ENCODE measurements at regions of chr11 and their contacts with region 1.

Region 1: DNA sequence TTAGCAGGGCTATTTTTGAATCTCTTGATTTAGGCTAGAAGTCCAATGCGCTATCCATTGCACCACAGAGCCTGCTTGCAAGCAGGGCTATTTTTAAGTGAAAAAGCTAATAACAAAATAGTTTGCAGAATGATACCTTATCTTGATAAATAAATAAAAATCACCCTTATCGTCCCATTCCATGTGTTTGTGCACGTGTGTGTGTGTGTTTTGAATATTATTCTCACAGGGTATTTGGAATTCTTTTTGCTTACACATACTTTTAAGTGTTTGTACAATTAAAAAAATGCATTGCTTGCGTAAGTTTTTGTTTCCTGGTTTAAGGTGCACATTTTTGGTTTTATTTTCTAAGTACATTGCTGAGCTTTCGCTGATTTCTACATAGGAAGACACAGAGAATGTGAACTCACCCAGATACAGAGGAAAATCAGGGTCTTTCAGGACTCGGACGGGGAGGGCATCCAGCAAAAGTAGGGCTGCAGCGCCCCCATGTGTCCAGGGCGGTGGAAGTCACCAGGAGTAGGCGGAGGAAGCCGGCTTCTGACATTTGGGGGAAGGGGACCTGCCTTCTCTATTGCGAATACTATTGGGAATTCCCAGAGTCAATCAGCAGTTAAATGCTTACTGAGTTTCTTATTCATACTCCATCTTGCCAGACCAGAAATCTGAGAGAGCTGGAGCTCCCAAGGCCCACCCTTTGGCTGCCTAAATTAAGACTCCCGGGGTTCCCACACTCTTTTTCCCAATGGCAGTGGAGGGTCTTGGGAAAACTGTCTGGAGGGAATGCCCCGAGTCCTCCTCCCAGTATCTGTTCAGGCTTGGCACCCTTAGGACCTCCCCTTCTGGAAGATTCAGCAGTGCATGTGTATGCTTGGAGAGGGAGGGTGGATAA is 27.2 kb downstream of the SLC1A2 start:
- DNase-seq: peak; percentile 78 to 89 (median 81)
- ATAC-seq: peak; percentile 83 to 95 (median 92)
- H3K4me3 ChIP-seq: peak overlapping the region in 3 of 12 donors; percentile 6 to 25 (median 6)
- H3K27ac ChIP-seq: no peak overlapping the region
- H3K4me1 ChIP-seq: peaks cover 0 to 20% (median 6%) of the 10 kb centered on the region in 12 donors
- H3K27me3 ChIP-seq: no peaks in the 10 kb centered on the region
- CTCF ChIP-seq: peak; percentile 74 to 97 (median 89)
- POLR2A ChIP-seq: no peak

Region 2: DNA sequence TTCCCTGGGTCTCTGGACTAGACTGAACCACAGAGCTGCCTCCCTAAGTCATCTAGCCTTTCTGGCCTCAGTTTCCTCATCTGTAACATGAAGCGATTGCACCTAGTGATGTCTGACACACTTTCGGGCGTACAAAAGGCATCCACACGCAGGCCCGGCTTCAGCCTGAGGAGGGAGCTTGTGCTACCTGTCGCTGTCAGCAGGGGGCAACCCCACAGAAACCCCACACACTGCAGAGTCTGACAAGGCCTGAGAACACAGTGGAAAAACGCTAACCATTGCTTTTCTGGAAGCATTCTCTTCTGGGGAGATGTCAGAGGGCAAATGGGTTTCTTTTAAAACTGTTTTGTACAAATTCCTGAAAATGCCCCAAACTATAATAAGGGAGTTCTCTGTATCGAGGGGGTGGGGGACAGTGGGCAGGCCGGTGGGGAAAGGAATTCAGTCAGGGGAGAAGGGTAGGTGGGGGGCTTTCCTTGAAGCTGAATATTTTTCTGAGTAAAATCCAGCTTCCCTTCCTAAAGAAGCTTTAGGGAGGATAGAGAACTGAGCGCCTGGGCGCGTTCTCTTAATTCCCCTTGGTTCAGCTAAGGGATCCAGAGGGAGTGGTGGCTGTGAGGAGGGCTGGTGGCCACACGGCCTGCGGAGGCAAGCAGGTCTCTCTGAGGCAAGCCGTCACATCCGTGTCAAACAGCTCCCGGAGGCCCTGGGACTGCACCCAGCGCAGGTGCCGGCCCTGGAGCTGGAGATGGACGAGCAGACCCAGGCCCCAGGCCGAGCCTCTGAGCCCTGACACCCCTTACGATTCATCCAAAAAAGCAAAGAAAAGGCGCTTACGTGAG is 879.1 kb before region 1 on chr11:
- intact Hi-C with region 1: loop called in 2 of 10 experiments (anchors 5 kb)
- DNase-seq: peak in 1 of 5 donors; percentile 39
- ATAC-seq: peak; percentile 49 to 87 (median 76)
- H3K4me3 ChIP-seq: no peak overlapping the region
- H3K27ac ChIP-seq: no peak overlapping the region
- H3K4me1 ChIP-seq: peaks cover 0 to 16% (median 0%) of the 10 kb centered on the region in 12 donors
- H3K27me3 ChIP-seq: no peaks in the 10 kb centered on the region
- CTCF ChIP-seq: peak; percentile 29 to 70 (median 54)
- POLR2A ChIP-seq: no peak

Region 3: DNA sequence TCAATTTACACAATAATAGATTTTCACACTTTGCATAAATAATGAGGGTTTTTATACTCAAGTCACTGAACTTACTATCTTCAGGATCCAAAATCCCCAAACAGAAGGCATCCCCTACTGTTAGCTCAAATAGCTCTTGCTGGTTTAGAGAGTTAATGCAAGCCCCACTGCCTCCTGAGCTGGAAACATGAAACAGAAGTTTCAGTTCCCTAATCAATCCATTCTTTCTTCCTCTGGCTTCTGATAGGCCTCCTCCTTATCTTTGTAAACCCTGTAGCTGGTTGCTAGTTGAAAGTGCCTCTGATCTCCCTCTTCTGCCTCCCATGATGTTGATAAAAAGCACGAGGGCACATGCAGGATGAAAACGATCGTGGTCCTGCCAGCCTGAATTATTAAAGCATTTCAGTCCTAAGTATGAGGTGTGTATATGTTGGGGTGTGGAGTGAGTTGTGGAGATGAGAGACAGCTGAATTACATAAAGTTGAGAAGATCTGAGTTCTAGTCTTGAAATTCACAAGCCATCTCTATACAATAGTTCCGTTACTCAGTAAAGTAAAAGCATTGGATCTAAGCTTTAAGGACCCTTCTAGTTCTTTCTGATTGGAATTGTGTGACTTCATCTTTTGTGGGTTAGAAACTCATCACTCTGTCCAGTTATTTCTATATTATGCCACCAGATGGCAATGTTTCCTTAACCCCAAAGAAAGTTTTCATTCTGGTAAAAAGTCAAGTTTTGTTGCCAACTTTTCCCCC is 806.3 kb before region 1 on chr11:
- intact Hi-C with region 1: loop called in 9 of 10 experiments (anchors 2 to 5 kb)
- DNase-seq: no peak
- ATAC-seq: peak in 2 of 4 donors; percentile 35 to 56
- H3K4me3 ChIP-seq: peak overlapping the region in 4 of 12 donors; percentile 12 to 44 (median 18)
- H3K27ac ChIP-seq: no peak overlapping the region
- H3K4me1 ChIP-seq: peaks cover 0 to 8% (median 0%) of the 10 kb centered on the region in 12 donors
- H3K27me3 ChIP-seq: peaks cover 0 to 3% (median 0%) of the 10 kb centered on the region in 9 donors
- CTCF ChIP-seq: peak; percentile 42 to 79 (median 66)
- POLR2A ChIP-seq: no peak

Region 4: GRCh38 chr11:34997952-34998528 is 394.1 kb before region 1 on chr11:
- intact Hi-C with region 1: loop called (anchors 1 to 5 kb)
- DNase-seq: no peak
- ATAC-seq: peak in 1 of 4 donors; percentile 55
- H3K4me3 ChIP-seq: no peak overlapping the region
- H3K27ac ChIP-seq: peak overlapping the region in 1 of 12 donors; percentile 19
- H3K4me1 ChIP-seq: peaks cover 0 to 15% (median 0%) of the 10 kb centered on the region in 12 donors
- H3K27me3 ChIP-seq: no peaks in the 10 kb centered on the region
- CTCF ChIP-seq: peak in 10 of 12 donors; percentile 23 to 68 (median 52)
- POLR2A ChIP-seq: no peak

Region 5: GRCh38 chr11:35182317-35182939 is 209.7 kb before region 1 on chr11:
- intact Hi-C with region 1: no loop called
- DNase-seq: no peak
- ATAC-seq: no peak
- H3K4me3 ChIP-seq: no peak overlapping the region
- H3K27ac ChIP-seq: no peak overlapping the region
- H3K4me1 ChIP-seq: peaks cover 0 to 68% (median 5%) of the 10 kb centered on the region in 12 donors
- H3K27me3 ChIP-seq: no peaks in the 10 kb centered on the region
- CTCF ChIP-seq: no peak
- POLR2A ChIP-seq: no peak

Region 6: DNA sequence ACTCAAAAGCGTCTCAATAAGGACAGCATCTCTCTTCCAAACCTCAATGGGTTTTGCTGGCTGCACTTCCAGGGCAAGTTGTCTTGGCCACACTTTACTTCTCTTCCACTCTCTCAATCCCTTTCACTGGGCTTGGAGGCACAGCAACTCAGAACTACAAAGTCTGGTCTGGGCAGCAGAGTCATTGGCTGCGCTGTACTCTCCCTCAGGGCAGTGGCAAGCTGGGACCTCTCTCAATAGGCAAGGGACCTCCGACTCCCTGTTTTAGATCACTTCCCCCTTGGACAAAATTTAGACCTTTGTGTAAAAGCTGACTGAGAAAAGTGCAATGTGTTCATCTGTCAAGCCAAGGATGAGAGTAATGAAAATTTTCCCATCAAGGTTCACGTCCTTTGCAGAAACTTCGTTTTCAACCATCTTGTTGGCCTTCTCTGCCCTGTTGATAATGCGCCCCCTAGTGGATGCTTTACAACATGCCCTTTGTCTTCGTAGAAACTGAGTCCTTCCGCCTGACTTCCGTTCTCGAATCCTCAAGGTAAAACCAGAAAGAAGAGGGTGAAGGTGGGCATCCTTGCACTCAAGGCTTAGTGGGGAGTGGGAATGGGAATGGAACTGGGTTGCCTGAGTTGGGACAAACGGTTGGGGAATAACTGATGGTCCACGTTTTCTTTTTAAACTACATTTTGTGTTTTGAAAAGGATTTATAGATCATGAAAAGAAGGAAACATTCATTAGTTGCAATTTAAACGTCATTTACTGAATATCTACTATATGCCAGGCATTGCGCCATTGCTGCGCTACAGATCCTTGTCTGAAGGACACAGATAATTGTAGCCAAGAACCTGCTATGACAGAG is 154.1 kb before region 1 on chr11:
- intact Hi-C with region 1: loop called in 4 of 10 experiments (anchors 5 to 10 kb)
- DNase-seq: peak in 3 of 5 donors; percentile 30 to 53 (median 47)
- ATAC-seq: peak in 1 of 4 donors; percentile 51
- H3K4me3 ChIP-seq: no peak overlapping the region
- H3K27ac ChIP-seq: no peak overlapping the region
- H3K4me1 ChIP-seq: peaks cover 0 to 47% (median 0%) of the 10 kb centered on the region in 12 donors
- H3K27me3 ChIP-seq: no peaks in the 10 kb centered on the region
- CTCF ChIP-seq: peak; percentile 62 to 84 (median 72)
- POLR2A ChIP-seq: no peak

Region 7: DNA sequence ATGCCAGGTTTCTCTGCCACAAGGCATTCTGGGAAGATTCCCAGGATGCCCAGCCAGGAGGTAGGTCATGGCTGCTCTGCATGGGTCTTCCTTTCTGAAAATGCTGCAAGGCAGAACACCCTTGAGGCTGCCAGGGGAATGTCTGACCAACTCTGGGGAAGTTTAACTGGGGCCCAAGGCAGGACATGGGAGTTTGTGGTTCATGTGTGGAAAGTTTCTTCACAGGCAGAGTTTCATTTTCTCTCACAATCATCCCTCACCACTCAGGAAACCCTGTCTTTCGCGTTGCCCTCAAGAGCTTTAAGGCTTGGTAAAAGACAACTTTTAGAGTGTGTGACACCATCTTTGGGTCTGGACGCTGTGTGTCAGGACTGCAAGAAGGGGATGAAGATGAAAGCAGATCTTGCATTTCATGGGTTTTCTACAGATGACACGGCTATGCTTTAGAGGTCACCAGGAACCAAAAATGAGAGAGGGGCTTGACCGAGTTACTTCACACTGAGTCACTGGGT is 119.7 kb before region 1 on chr11:
- intact Hi-C with region 1: loop called in 1 of 10 experiments (anchors 10 kb)
- DNase-seq: no peak
- ATAC-seq: no peak
- H3K4me3 ChIP-seq: no peak overlapping the region
- H3K27ac ChIP-seq: no peak overlapping the region
- H3K4me1 ChIP-seq: peaks cover 0 to 28% (median 7%) of the 10 kb centered on the region in 12 donors
- H3K27me3 ChIP-seq: no peaks in the 10 kb centered on the region
- CTCF ChIP-seq: no peak
- POLR2A ChIP-seq: no peak